ENCODE measurements at regions of chr11 and their contacts with region 1.

Region 1: GRCh38 chr11:18012863-18013781 is at the start of gene SERGEF:
- DNase-seq: peak; percentile 92
- H3K4me3 Mint-ChIP-seq: peak within 1 kb of the TSS; percentile 97
- H3K27ac Mint-ChIP-seq: peak within 1 kb of the TSS; percentile 98
- H3K4me1 Mint-ChIP-seq: peaks cover 44% of the 10 kb centered on the region
- H3K27me3 Mint-ChIP-seq: peaks cover 5% of the 10 kb centered on the region
- total RNA-seq, gene SERGEF: 24.5 and 32.8 TPM in 2 replicates

Region 2: GRCh38 chr11:17276236-17277023 is 736.7 kb before region 1 on chr11 and contains the start of gene NUCB2:
- intact Hi-C with region 1: loop called (anchors 2 kb)
- DNase-seq: peak; percentile 95
- H3K4me3 Mint-ChIP-seq: peak within 1 kb of the TSS; percentile 87
- H3K27ac Mint-ChIP-seq: peak within 1 kb of the TSS; percentile 77
- H3K4me1 Mint-ChIP-seq: peaks cover 48% of the 10 kb centered on the region
- H3K27me3 Mint-ChIP-seq: peaks cover 3% of the 10 kb centered on the region
- total RNA-seq, gene NUCB2: 51.1 and 61.7 TPM in 2 replicates

Region 3: DNA sequence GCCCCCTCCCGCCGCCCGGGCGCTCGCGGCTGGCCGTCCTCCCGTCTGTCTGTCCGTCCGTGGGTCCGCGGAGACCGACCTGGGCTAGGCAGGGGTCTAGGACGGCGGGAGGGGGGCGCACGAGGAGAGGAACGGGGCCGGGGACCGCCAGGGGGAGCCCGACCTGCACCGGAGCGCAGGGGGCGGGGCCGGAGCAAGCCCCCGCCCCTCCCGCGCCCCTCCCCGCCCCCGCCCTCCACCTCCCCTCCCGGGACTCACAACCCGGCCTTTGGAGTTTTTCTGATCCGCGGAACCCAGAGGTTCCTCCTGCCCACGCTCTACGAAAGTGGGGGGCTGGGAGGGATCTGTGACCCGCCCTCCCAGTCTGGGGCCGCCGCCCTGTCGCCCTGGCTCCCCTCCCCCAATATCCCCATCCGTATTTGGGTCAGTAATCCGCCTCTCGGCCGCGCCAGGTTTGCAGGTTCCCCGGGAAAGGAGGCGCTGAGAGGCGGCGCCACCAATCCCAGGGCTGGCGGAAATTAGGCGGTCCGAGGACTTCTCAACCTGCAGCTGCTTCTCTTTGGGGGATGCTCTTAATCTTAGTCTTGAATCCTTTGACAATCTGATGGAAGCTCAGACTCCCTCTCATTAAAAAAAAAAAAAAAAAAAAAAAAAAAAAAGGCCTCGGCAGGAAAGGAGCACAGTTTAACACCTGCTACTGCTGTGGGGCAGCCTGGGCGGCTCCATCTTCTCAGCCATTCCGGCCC is 623.7 kb before region 1 on chr11:
- intact Hi-C with region 1: loop called (anchors 5 kb)
- DNase-seq: peak; percentile 65
- H3K4me3 Mint-ChIP-seq: peak overlapping the region; percentile 78
- H3K27ac Mint-ChIP-seq: peak overlapping the region; percentile 71
- H3K4me1 Mint-ChIP-seq: no peaks in the 10 kb centered on the region
- H3K27me3 Mint-ChIP-seq: peaks cover 26% of the 10 kb centered on the region

Region 4: GRCh38 chr11:18698341-18699268 is 685.5 kb after region 1 on chr11 and contains the start of gene TMEM86A:
- intact Hi-C with region 1: loop called (anchors 2 kb)
- DNase-seq: peak; percentile 89
- H3K4me3 Mint-ChIP-seq: peak within 1 kb of the TSS; percentile 83
- H3K27ac Mint-ChIP-seq: peak within 1 kb of the TSS; percentile 65
- H3K4me1 Mint-ChIP-seq: peaks cover 25% of the 10 kb centered on the region
- H3K27me3 Mint-ChIP-seq: peaks cover 22% of the 10 kb centered on the region
- total RNA-seq, gene TMEM86A: 0.52 and 0.93 TPM in 2 replicates

Measured in activated T-helper 1 cell treated with anti-CD3 and anti-CD28 coated beads, Interleukin-12 subunit alpha, Interleukin-12 subunit beta, Interleukin-2, Interleukin-4 antibody, amounts not matched to agents 30 ng/mL and 10 ng/mL and 1 ng/mL, durations not matched to agents 14 hours and 24 hours and 36 hours (primary cell).